Pancreas (tissue), 10 donors: ENCODE measurements at regions of chr13 and their contacts with region 1.

Region 1: DNA sequence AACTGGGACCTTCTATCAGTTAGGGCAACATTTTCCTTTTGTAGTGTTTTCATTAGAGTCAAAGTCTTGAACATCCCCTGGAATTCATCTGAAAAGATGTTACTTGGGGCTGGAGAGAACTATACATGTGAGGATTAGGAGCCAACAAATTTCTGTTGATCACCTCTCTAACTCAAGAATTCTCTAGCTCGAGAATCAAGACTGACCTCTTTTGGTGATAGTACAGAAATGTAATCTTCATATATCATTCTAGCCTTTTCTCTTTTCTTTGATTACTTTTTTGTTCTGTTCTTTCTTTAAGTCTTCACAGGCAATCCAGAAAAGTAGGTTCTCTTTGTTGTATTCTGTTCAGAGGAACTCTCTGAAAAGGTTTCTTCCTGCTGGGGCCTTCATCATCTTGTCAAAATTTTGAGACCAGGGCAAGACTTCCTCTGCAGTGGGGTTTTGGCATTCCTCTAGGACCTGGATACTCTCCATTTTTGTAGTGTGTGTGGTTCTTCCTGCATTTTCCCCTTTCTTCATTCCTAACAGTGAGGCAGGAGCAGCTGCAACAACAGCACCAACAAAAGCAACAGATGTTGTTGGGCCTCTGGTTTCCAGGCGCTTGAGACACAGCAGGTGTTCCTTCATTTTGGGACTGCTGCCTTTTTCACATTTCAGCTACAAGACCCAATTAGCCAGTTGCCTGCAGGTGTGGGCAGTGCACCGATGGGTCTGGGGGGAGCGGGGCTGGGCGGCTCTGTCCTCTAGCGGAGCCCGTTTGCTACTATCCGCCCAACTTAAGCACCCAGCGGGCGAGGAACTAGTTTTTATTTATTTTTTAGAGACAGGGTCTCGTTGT is 26.2 kb downstream of the ELF1 start:
- DNase-seq: peak in 5 of 6 donors; percentile 37 to 63 (median 42)
- ATAC-seq: peak; percentile 29 to 52 (median 36)
- H3K4me3 ChIP-seq: no peak overlapping the region
- H3K27ac ChIP-seq: peak overlapping the region; percentile 67 to 85 (median 72)
- H3K4me1 ChIP-seq: peaks cover 23 to 67% (median 65%) of the 10 kb centered on the region in 3 donors
- H3K27me3 ChIP-seq: no peaks in the 10 kb centered on the region
- CTCF ChIP-seq: no peak

Region 2: GRCh38 chr13:40318366-40318765 is 674.5 kb before region 1 on chr13:
- intact Hi-C with region 1: no loop called
- DNase-seq: peak; percentile 38 to 88 (median 69)
- ATAC-seq: peak; percentile 27 to 79 (median 68)
- H3K4me3 ChIP-seq: no peak overlapping the region
- H3K27ac ChIP-seq: no peak overlapping the region
- H3K4me1 ChIP-seq: peaks cover 0 to 3% (median 0%) of the 10 kb centered on the region in 3 donors
- H3K27me3 ChIP-seq: no peaks in the 10 kb centered on the region
- CTCF ChIP-seq: no peak

Region 3: GRCh38 chr13:41054212-41054877 is 61.4 kb after region 1 on chr13:
- intact Hi-C with region 1: loop called in 2 of 3 experiments (anchors 10 kb)
- DNase-seq: no peak
- ATAC-seq: peak in 3 of 4 donors; percentile 41 to 55 (median 53)
- H3K4me3 ChIP-seq: no peak overlapping the region
- H3K27ac ChIP-seq: peak overlapping the region in 1 of 4 donors; percentile 34
- H3K4me1 ChIP-seq: peaks cover 20 to 73% (median 44%) of the 10 kb centered on the region in 3 donors
- H3K27me3 ChIP-seq: no peaks in the 10 kb centered on the region
- CTCF ChIP-seq: peak in 2 of 4 donors; percentile 28 to 36

Region 4: GRCh38 chr13:41178040-41178439 is 185.1 kb after region 1 on chr13:
- intact Hi-C with region 1: no loop called
- DNase-seq: no peak
- ATAC-seq: no peak
- H3K4me3 ChIP-seq: no peak overlapping the region
- H3K27ac ChIP-seq: no peak overlapping the region
- H3K4me1 ChIP-seq: no peaks in the 10 kb centered on the region
- H3K27me3 ChIP-seq: no peaks in the 10 kb centered on the region
- CTCF ChIP-seq: no peak

Region 5: DNA sequence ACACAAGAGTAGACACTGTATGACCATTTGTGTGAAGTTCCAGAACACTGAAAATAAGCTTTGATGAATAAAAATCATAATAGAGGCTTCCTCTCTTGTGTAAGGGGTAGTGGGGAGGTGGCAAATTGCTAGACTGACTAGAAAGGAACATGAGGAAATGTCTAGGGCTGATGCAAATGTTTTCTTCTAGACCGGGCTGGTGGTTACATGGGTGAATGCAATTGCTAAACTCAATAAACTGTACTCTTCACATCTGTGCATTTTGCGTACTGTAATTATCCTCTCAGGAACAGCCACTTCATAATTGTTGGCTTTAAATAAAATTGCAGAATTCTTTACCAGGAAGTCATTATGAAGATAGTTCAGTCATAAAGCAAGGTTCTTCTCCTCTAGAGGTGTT is 206.6 kb after region 1 on chr13:
- intact Hi-C with region 1: no loop called
- DNase-seq: no peak
- ATAC-seq: no peak
- H3K4me3 ChIP-seq: no peak overlapping the region
- H3K27ac ChIP-seq: no peak overlapping the region
- H3K4me1 ChIP-seq: no peaks in the 10 kb centered on the region
- H3K27me3 ChIP-seq: no peaks in the 10 kb centered on the region
- CTCF ChIP-seq: no peak